ENCODE measurements at regions of chr17 and their contacts with region 1.

Region 1: GRCh38 chr17:27446569-27447301 is 9.5 kb upstream of the KSR1 start:
- DNase-seq: peak; percentile 97
- H3K4me3 ChIP-seq: no peak overlapping the region
- H3K27ac ChIP-seq: peak overlapping the region; percentile 75
- H3K4me1 ChIP-seq: peaks cover 23% of the 10 kb centered on the region
- H3K27me3 ChIP-seq: no peaks in the 10 kb centered on the region
- CTCF ChIP-seq: no peak
- POLR2A ChIP-seq: no peak

Region 2: DNA sequence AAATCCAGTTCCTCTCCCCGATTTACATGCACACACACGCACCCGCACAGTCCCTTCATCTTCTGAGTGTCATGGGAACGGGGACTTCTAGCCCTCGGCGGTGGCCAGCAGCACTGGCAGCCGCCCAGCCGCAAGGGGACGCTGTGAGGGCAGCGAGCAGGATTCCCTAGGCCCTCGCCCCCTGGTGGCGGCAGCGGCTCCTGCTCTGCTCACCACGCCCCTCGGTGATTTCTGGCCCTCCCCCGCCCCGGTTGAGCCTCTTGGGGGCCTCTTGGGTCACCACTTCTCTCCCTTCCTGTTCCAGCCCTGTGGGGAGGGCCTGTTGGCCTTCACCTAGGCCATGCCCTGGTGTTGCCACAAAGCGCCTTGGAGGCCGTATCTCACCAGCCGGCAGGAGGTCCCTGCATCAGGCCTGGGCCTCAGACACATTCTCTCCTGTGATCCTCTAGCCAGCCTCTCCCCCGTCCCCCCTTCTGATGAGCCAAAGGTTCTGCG is 65.7 kb before region 1 on chr17:
- CTCF ChIA-PET with region 1: no interaction called
- POLR2A ChIA-PET with region 1: interaction called, 3 read pairs
- dilution Hi-C with region 1: no loop called
- intact Hi-C with region 1: loop called (anchors 1 kb)
- DNase-seq: peak; percentile 51
- H3K4me3 ChIP-seq: no peak overlapping the region
- H3K27ac ChIP-seq: peak overlapping the region; percentile 77
- H3K4me1 ChIP-seq: peaks cover 45% of the 10 kb centered on the region
- H3K27me3 ChIP-seq: no peaks in the 10 kb centered on the region
- CTCF ChIP-seq: peak; percentile 94 to 95
- POLR2A ChIP-seq: no peak

Region 3: DNA sequence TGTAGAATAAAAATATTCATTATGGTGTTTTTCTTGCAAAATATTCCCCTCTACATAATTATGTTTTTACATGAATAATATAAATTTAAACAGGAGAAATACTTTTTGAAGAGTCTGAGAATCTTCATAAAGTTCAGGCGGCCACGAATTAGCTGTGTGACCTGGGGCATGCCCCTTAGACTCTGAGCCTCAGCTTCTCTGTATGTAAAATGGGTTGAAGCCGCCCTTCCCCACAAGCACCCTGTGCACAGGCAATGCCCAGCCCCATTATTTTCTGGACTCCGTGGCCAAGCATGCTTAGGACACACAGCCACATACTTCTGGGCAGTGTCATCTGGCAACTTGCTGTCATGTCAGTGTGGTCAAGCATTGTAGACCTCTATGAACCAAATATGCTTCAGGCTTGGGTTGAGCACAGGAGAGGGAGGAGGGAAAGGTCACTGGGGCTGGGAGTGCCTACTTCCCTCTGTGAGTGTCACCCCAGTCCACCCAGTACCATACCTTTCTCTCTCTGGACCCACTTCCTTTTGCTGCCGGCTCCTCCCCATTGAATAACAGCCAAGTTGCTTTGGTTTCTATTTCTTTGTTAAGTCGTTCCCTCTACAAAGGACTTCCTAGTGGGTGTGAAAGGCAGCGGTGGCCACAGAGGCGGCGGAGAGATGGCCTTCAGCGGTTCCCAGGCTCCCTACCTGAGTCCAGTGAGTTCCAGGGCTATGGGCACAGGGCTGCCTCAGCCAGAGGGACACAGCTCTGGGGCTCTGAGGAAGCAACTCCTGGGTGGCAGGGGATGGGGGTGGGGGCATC is 184.1 kb after region 1 on chr17 and contains the start of gene LGALS9:
- CTCF ChIA-PET with region 1: no interaction called
- POLR2A ChIA-PET with region 1: no interaction called
- dilution Hi-C with region 1: no loop called
- intact Hi-C with region 1: no loop called
- DNase-seq: peak; percentile 31
- H3K4me3 ChIP-seq: peak within 1 kb of the TSS in 1 of 3 experiments; percentile 35
- H3K27ac ChIP-seq: no peak within 1 kb of the TSS
- H3K4me1 ChIP-seq: peaks cover 12% of the 10 kb centered on the region
- H3K27me3 ChIP-seq: no peaks in the 10 kb centered on the region
- CTCF ChIP-seq: no peak
- POLR2A ChIP-seq: no peak
- total RNA-seq, gene LGALS9: 32.5 and 52.4 TPM in 2 replicates